ENCODE measurements at regions of chr3 and their contacts with region 1.

Region 1: DNA sequence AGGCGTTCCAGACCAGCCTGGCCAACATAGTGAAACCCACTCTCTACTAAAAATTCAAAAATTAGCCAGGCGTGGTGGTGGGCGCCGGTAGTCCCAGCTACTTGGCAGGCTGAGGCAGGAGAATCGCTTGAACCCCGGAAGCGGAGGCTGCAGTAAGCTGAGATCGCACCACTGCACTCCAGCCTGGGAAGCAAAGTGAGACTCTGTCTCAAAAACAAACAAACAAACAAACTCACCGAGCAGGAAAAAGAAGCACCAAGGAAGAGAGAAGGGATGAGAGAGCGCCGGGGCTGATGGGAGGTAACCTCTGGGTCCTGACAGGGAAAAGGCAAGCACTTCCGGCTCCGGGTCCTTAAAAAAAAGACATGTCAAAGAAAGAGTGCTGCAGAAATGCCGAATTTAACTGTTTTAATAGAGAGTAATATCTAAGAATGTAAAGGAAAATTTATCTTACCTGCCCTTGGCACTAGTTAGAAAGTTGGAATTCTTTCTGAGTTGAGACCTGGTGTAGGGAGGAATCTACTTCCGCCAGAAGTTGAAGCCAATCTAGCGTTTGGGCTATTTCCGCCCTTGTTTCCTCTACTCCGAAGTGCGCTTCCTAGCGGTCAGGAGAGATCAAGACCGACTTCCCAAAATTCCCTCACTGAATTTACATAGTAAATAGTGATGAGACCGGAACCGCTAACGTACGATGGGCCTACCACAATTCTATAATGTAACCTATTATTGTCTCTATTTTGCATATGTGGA is 29.1 kb downstream of the EFCAB12 start:
- DNase-seq: peak; percentile 90
- H3K4me3 ChIP-seq: peak overlapping the region; percentile 87
- H3K27ac ChIP-seq: peak overlapping the region; percentile 68
- H3K27me3 ChIP-seq: no peaks in the 10 kb centered on the region
- CTCF ChIP-seq: peak; percentile 81

Region 2: DNA sequence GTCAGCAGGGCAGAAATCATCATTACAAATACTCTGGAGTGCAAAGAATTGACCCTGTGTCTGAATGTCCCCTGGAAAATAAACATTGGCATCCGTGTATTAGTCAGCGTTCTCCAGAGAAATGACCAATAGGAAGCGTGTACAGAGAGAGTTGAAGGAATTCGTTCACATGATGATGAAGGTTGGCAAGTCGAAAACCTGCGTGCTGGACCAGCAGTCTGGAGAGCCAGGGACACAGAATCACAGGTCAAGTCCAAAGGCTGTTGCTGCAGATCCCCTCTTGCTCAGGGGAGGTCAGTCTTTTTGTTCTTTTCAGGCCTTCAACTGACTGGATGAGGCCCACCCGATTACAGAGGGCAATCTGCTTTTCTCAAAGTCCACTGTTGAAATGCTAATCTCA is 322.1 kb before region 1 on chr3:
- CTCF ChIA-PET with region 1: no interaction called
- POLR2A ChIA-PET with region 1: no interaction called
- DNase-seq: peak; percentile 16
- H3K4me3 ChIP-seq: no peak overlapping the region
- H3K27ac ChIP-seq: peak overlapping the region; percentile 31
- H3K27me3 ChIP-seq: peaks cover 5% of the 10 kb centered on the region
- CTCF ChIP-seq: no peak

Region 3: DNA sequence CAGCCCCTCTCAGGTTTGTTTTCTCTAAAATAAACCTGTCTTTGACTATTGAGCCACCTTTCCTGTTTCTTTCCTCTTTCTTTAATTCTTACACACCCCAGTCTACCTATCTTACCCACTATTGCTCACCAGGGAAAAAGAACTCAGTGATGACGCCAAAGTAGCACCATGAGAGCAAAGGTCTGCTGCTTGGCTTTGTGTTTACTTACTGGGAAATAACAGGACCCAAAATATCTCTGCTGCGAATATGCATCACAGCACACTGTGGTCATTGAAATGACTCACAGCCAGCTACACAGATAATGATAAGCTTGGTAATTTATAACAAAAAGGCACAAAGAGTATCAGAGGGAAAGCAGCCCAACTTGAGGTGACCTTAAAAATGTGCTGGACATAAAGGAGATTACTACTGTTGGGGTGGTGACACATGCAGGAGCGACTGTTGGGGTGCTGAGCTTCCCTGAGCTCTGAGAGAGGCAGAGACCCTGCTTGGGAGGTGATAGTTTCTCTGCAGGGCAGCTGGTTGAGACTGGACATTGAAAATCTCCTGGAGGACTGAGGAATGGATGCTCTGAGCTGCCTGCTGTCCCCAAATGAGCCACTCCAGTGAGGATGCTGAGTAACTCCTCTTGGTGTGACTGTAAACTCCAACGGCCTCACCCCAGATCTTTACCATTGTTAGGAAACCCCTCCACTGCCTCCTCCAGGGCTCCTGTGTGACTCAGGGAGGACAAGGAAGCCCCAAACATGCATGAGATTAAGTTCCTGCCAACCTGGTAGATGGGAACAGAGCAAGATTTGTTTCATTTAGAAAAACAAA is 14.6 kb after region 1 on chr3:
- CTCF ChIA-PET with region 1: interaction called, 16 read pairs
- POLR2A ChIA-PET with region 1: interaction called, 6 read pairs
- DNase-seq: peak; percentile 88
- H3K4me3 ChIP-seq: no peak overlapping the region
- H3K27ac ChIP-seq: peak overlapping the region; percentile 96
- H3K27me3 ChIP-seq: no peaks in the 10 kb centered on the region
- CTCF ChIP-seq: no peak

Region 4: GRCh38 chr3:129428376-129429079 is 29.2 kb after region 1 on chr3 and contains the start of gene EFCAB12:
- CTCF ChIA-PET with region 1: interaction called, 12 read pairs
- POLR2A ChIA-PET with region 1: no interaction called
- DNase-seq: peak; percentile 79
- H3K4me3 ChIP-seq: peak within 1 kb of the TSS; percentile 76
- H3K27ac ChIP-seq: no peak within 1 kb of the TSS
- H3K27me3 ChIP-seq: peaks cover 3% of the 10 kb centered on the region
- CTCF ChIP-seq: no peak
- polyA plus RNA-seq, gene EFCAB12: 0.07 and 0.19 TPM in 2 replicates

Region 5: GRCh38 chr3:129449279-129450115 is 50.2 kb after region 1 on chr3:
- CTCF ChIA-PET with region 1: no interaction called
- POLR2A ChIA-PET with region 1: no interaction called
- DNase-seq: no peak
- H3K4me3 ChIP-seq: no peak overlapping the region
- H3K27ac ChIP-seq: no peak overlapping the region
- H3K27me3 ChIP-seq: no peaks in the 10 kb centered on the region
- CTCF ChIP-seq: no peak

Measured in AG04450 (cell line).